GM13977 (cell line): ENCODE measurements at regions of chr1 and their contacts with region 1.

Region 1: GRCh38 chr1:234730770-234731568 is 121.0 kb upstream of the IRF2BP2 start:
- DNase-seq: peak; percentile 85
- CTCF ChIP-seq: peak; percentile 25

Region 2: DNA sequence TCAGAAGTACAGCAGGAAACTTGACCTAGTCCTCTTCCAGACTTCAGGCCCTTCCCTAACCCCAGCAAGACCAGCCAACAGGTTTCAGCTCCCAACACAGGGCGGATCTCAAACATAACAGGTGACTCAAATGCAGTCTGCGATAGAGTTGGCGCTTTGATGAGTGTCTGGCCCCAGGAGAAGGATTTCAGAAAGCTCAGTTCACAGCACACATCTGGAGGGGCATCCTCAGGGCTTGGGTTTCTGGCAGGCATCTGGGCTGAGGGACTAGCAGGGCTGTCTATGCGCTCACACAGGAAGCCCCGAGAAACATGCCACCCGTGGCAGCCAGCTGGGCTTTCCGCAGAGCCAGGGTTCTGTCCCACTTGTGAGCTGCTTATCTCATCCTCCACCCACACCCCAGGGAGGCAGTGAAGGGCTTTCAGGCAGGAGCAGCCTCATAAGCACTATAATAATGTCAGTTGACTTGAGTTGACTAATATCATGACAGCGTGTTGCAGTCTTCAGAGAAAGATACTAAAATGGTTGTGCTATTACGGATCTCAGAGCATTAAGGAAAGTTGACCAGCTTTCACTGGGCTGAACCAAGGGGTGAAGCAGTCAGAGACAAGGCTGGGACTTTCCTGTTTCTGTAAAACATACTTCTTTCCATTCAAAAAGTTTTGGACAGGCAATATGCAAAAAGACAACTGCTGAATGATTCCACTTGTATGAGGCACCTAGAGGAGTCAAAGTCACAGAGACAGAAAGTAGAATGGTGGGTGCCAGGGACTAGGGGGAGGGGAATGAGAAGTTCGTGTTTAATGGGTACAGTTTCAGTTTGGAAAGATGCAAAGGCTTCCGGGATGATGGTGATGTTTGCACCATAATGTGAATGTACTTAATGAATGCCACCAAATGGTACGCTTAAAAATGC is 112.0 kb after region 1 on chr1:
- in situ Hi-C with region 1: loop called (anchors 25 kb)
- DNase-seq: peak; percentile 73
- CTCF ChIP-seq: no peak

Region 3: DNA sequence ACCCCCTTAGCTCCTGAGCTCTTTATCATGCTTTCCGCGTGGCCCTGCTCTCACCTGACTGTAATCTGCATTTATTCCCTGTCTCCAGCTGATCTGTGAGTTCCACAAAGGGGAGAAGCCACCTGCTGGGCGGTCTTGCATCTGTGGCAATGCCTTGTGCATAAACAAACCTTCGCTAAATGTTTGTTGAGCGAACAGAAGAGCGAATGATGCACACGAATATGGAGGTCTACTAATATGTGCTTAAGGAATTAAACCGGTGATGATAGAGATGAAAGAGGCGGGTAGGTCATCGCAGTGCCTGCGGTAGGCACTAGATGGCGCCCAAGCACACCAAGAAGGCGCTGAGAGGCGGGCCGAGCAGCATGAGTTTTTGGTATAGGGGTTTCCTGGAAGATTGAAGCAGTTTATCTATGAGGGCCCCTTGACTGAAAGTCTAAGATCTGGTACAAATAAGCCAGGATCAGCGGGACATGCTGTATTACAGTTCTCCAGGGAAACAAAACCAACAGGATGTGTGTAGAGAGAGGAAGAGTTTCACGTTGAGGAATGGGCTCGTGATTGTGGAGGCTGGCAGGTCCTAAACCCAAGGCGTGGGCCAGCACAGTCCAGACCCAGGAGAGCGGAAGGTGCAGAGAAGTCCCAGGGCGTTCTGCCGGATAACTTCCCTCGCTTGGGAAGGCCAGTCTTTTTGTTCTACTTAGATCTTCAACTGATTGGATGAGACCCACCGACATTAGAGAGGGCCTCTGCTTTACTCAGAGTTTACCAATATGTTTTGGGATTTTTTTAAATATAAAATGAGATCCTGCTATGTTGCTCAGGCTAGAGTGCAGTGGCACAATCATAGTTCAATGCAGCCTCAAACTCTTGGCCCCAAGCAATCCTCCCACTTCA is 363.0 kb after region 1 on chr1:
- in situ Hi-C with region 1: loop called (anchors 25 kb)
- DNase-seq: peak; percentile 83
- CTCF ChIP-seq: peak; percentile 87